Activated B cell treated with CpG ODN at 0.5 μM for 24 hours (primary cell): ENCODE measurements at regions of chr12 and their contacts with region 1.

Region 1: DNA sequence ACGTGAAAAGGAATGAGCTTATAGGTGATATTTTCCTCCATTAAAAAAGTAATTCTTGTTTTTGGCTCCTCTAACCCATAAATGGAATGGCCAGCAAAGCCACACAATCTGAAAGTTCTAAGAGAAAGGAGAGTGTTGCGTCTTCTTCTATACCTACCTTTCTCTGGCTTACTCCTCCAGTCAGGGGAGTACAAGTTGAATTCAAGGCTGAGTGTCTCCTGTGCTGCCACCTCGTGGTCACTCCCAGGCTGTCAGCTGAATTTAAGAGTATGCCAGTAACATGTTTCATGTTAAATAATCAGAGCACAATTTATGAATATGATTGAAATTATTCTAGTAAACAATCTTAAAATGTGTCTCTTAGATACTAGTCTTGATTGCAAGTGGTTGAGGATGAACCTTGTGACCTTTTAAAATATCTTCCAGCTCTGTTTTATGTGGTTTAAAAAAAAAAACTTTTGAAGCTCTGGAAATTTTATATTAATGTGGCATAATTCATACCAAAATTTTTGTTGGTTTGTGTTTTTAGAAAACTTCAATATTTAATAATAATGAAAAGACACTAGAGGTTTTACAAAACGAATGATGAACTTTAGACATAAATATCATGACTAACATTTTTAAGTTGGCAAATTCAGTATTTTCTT is 31.7 kb downstream of the PTHLH start:
- DNase-seq: peak; percentile 40
- ATAC-seq: peak; percentile 58
- H3K4me3 Mint-ChIP-seq: no peak overlapping the region
- H3K27ac Mint-ChIP-seq: no peak overlapping the region
- H3K4me1 Mint-ChIP-seq: no peaks in the 10 kb centered on the region
- H3K27me3 Mint-ChIP-seq: peaks cover 6% of the 10 kb centered on the region
- CTCF ChIP-seq: peak; percentile 16

Region 2: GRCh38 chr12:27733052-27733656 is 207.7 kb before region 1 on chr12:
- CTCF ChIA-PET with region 1: interaction called, 23 read pairs
- POLR2A ChIA-PET with region 1: no interaction called
- intact Hi-C with region 1: loop called (anchors 1 kb)
- DNase-seq: no peak
- ATAC-seq: peak; percentile 61
- H3K4me3 Mint-ChIP-seq: no peak overlapping the region
- H3K27ac Mint-ChIP-seq: no peak overlapping the region
- H3K4me1 Mint-ChIP-seq: no peaks in the 10 kb centered on the region
- H3K27me3 Mint-ChIP-seq: no peaks in the 10 kb centered on the region
- CTCF ChIP-seq: no peak

Region 3: DNA sequence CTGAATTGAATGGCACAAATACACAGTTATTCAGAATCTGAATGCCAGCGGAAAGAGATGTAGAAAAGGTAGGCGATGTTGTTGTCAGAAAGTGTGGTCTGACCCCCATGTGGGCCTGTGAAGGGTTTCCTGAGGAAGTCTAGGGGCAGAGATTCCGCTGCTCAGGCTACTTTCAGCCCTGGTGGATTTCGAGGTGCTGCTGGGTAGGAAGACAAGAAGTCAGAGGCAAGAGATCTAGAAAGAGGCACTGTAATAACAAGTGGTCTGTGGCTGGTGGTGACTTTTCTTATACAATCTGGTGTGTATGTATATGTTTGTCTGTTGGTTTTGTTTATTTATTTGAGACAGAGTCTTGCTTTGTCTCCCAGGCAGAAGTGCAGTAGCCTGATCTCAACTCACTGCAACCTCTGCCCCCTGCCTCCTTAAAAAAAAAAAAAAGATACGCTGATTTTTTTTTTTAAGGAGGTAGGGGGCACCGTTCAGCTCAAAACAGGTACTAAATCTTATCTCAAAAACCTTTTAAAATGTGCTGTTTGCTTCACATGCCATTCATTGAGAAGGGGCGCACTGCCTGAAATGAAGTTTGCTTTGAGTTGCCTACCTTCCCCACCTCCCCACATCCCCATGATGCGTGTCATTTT is 133.7 kb before region 1 on chr12:
- CTCF ChIA-PET with region 1: no interaction called
- POLR2A ChIA-PET with region 1: no interaction called
- intact Hi-C with region 1: loop called (anchors 5 kb)
- DNase-seq: no peak
- ATAC-seq: no peak
- H3K4me3 Mint-ChIP-seq: no peak overlapping the region
- H3K27ac Mint-ChIP-seq: no peak overlapping the region
- H3K4me1 Mint-ChIP-seq: no peaks in the 10 kb centered on the region
- H3K27me3 Mint-ChIP-seq: no peaks in the 10 kb centered on the region
- CTCF ChIP-seq: no peak

Region 4: DNA sequence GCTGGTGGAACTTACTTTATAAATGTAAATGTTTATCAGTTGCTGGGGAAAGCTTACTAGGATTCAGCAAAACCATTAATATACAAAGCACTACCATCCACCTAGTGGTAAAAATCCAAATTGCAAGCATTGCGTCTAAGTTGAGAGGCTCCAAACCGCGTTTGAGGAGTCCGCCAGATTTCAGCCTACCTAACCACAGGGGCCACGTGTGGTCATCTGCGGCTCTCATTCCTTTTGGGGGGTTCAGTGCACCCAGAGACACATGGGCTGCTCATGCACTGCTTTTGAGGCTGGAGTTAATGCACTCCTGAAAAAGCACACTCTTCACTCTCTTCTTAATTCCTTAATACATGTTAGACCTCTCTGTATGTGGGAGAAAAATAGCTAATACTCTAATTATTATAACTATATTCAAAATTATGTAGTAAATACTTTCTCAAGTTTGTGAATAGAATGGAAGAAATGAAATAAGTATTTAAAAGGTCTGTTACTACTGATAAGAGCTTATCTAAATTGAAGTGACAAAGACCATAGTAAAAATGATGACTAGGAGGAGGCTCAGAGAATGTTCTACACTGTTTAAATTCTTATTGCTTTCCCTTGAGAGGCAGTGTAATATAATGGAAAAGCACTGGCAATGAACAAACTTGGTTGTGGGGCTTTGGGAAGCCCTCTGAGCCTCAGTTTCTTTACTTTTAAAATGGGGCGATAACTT is 119.5 kb before region 1 on chr12:
- CTCF ChIA-PET with region 1: interaction called, 3 read pairs
- POLR2A ChIA-PET with region 1: interaction called, 3 read pairs
- intact Hi-C with region 1: loop called (anchors 1 kb)
- DNase-seq: peak; percentile 24
- ATAC-seq: peak; percentile 25
- H3K4me3 Mint-ChIP-seq: peak overlapping the region; percentile 66
- H3K27ac Mint-ChIP-seq: peak overlapping the region; percentile 73
- H3K4me1 Mint-ChIP-seq: peaks cover 38% of the 10 kb centered on the region
- H3K27me3 Mint-ChIP-seq: peaks cover 2% of the 10 kb centered on the region
- CTCF ChIP-seq: peak; percentile 43

Region 5: GRCh38 chr12:27915021-27915420 is 25.9 kb before region 1 on chr12:
- CTCF ChIA-PET with region 1: no interaction called
- POLR2A ChIA-PET with region 1: no interaction called
- intact Hi-C with region 1: no loop called
- DNase-seq: no peak
- ATAC-seq: no peak
- H3K4me3 Mint-ChIP-seq: no peak overlapping the region
- H3K27ac Mint-ChIP-seq: no peak overlapping the region
- H3K4me1 Mint-ChIP-seq: no peaks in the 10 kb centered on the region
- H3K27me3 Mint-ChIP-seq: peaks cover 1% of the 10 kb centered on the region
- CTCF ChIP-seq: no peak